ENCODE measurements at regions of chr11 and their contacts with region 1.

Region 1: GRCh38 chr11:97140885-97141494 is 751.2 kb downstream of the JRKL start:
- DNase-seq: no peak
- ATAC-seq: no peak
- H3K4me3 ChIP-seq: no peak overlapping the region
- H3K27ac ChIP-seq: no peak overlapping the region
- H3K4me1 ChIP-seq: no peaks in the 10 kb centered on the region
- H3K27me3 ChIP-seq: no peaks in the 10 kb centered on the region
- CTCF ChIP-seq: no peak
- POLR2A ChIP-seq: no peak

Region 2: DNA sequence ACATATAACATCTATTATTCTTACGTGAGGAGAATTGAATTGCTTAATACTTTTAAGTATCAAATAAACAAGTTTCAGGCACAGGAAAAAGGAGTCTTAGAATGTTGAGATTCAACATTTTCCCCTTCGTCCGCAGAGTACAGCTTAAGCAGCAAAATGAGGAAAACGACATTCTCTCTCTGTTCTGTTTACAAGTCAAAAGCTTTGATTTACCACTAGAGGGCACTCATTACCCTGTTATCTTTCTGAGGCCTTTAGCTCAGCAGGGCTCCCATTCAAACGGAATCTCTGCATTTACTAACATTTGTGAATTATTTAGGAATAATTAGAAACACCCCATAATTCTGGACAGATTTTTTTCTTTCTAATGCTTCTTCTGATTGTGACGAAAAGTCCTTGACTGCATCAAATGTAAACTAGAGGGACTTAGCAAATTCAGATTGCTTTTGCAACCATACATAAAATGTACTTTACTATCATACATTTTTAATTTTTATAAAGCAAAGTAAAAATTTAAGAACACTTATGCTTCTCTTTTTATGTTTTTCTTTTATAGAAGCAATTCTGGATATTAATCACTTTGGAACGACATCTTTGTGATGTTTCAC is 676.2 kb before region 1 on chr11:
- in situ Hi-C with region 1: loop called in 1 of 4 experiments (anchors 25 kb)
- intact Hi-C with region 1: loop called (anchors 2 kb)
- DNase-seq: no peak
- ATAC-seq: peak; percentile 78 to 81
- H3K4me3 ChIP-seq: peak overlapping the region in 2 of 4 donors; percentile 9 to 23
- H3K27ac ChIP-seq: no peak overlapping the region
- H3K4me1 ChIP-seq: no peaks in the 10 kb centered on the region
- H3K27me3 ChIP-seq: no peaks in the 10 kb centered on the region
- CTCF ChIP-seq: peak; percentile 24 to 71 (median 55)
- POLR2A ChIP-seq: no peak

Region 3: DNA sequence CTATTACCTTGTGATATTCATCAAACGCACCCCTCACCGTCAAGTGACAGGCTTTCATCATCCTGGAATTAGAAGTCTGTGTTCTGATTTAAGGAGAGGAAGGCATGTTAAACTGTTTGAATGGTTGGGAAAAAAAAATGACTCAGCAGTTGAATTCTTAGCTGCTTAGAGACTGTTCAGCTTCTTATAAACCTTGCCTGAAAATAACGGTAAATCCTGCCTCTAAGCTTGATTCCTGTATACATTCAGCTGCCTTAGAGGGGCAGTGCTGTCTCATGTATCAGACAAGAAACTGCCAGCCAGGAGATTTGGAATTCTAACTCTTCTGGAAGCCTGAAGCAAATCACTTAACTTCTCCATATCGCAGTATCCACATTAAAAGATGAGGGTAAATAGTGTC is 313.8 kb before region 1 on chr11:
- in situ Hi-C with region 1: no loop called
- intact Hi-C with region 1: loop called (anchors 10 kb)
- DNase-seq: no peak
- ATAC-seq: no peak
- H3K4me3 ChIP-seq: no peak overlapping the region
- H3K27ac ChIP-seq: no peak overlapping the region
- H3K4me1 ChIP-seq: no peaks in the 10 kb centered on the region
- H3K27me3 ChIP-seq: no peaks in the 10 kb centered on the region
- CTCF ChIP-seq: no peak
- POLR2A ChIP-seq: no peak